Kidney (tissue), 22 donors: ENCODE measurements at regions of chr2 and their contacts with region 1.

Region 1: DNA sequence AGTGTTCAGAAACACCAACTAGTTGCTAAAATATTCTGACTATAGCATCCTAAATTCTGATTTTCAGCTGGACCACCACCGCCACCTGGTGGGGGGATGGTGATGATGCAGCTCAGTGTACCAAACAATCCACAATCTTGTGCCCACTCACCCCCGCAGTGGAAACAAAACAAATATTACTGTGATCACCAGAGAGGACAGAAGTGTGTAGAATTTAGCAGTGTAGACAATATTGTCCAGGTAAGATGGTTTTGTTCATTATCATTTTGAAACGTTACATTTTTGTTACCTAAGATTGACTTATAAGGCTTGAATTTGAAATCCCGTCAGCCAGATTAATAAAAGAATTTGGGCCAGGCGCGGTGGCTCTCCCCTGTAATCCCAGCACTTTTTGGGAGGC is 31.7 kb upstream of the UBXN4 start:
- DNase-seq: peak in 4 of 5 donors; percentile 53 to 71 (median 62)
- H3K4me3 ChIP-seq: no peak overlapping the region
- H3K27ac ChIP-seq: no peak overlapping the region
- H3K4me1 ChIP-seq: no peaks in the 10 kb centered on the region
- H3K27me3 ChIP-seq: no peaks in the 10 kb centered on the region
- CTCF ChIP-seq: peak; percentile 97

Region 2: DNA sequence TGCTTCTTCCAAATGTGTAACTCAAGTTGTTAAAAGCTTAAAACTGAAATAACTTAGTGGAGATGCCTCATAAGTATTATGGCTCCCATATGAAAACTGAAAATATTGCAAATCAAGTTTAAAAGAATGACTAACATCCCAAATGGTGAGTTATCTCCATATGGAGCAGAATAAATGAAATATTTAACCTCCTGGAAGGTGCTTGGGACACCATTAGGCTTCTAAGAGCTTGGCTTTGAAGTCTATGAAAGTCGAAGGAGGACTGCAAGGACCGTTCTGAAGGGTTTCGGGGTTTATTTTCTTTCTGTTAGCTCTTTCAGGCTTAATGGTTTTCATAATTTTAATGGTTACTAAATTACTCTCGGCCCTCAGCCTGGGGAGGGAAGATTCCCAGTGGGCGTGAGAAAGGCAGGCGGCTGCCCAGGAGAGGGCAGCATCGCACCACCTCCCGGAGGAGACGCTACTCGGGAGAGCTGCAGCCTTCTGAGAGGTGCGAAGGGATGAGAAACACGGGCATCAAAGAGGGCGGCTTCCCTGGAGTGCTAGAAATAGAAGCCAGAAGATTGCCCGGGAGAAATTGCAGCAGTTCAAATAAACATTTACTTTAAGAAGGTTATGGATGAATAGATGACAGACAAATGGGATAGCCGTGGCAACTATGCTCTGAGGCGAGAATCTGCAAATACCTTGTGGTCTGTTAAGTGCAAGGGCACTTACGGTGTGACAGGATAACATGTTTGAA is 705.8 kb before region 1 on chr2:
- intact Hi-C with region 1: loop called (anchors 5 kb)
- DNase-seq: peak; percentile 69 to 83 (median 80)
- H3K4me3 ChIP-seq: no peak overlapping the region
- H3K27ac ChIP-seq: no peak overlapping the region
- H3K4me1 ChIP-seq: no peaks in the 10 kb centered on the region
- H3K27me3 ChIP-seq: no peaks in the 10 kb centered on the region
- CTCF ChIP-seq: peak; percentile 89